CD8-positive, alpha-beta memory T cell (primary cell): ENCODE measurements at regions of chr18 and their contacts with region 1.

Region 1: DNA sequence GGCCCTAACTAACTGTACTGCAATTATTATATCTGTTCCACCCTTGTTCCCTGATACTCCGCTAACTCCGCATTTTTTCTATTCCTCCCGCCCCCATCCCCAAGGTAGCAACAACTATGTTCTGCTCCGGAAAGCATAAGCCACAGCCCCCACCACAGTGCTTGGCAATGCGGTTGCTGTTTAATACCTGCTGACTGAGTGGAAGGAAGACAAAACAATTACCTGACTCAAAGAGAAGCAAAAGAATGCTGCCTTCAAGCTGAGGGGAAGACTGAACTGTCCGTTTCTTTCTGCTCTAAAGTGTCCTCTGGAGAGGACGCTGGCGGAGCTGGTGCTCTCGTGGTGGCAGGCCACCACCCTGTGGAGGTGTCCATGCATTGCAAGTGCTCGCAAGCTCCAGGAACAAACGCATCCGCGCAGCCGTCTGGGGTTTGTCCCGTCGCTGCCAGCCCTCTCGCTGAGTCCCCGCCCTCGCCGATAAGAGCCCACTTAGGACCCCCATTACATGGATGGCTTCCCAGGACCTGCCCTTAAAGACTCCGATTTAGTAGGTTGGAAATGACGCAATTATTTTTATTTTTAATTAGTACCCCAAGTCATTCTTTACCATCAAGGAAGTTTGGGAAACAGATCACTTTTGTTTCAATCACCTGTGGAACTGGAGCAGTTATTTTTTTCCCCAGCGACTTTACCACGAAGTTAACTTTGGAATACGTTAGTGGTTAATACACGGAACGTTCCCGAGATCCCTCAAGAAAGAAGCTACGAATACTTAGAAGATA is 1.6 kb upstream of the MYL12A start:
- DNase-seq: peak; percentile 62 to 83 (median 69)
- H3K4me3 ChIP-seq: peak overlapping the region; percentile 96
- H3K4me3 Mint-ChIP-seq: peak overlapping the region; percentile 92 to 98 (median 94)
- H3K27ac ChIP-seq: peak overlapping the region; percentile 96
- H3K27ac Mint-ChIP-seq: peak overlapping the region; percentile 91 to 98 (median 97)
- H3K4me1 ChIP-seq: peaks cover 23% of the 10 kb centered on the region
- H3K4me1 Mint-ChIP-seq: peaks cover 33 to 53% (median 45%) of the 10 kb centered on the region in 3 donors
- H3K27me3 ChIP-seq: no peaks in the 10 kb centered on the region
- H3K27me3 Mint-ChIP-seq: peaks cover 0 to 2% of the 10 kb centered on the region in 2 donors

Region 2: DNA sequence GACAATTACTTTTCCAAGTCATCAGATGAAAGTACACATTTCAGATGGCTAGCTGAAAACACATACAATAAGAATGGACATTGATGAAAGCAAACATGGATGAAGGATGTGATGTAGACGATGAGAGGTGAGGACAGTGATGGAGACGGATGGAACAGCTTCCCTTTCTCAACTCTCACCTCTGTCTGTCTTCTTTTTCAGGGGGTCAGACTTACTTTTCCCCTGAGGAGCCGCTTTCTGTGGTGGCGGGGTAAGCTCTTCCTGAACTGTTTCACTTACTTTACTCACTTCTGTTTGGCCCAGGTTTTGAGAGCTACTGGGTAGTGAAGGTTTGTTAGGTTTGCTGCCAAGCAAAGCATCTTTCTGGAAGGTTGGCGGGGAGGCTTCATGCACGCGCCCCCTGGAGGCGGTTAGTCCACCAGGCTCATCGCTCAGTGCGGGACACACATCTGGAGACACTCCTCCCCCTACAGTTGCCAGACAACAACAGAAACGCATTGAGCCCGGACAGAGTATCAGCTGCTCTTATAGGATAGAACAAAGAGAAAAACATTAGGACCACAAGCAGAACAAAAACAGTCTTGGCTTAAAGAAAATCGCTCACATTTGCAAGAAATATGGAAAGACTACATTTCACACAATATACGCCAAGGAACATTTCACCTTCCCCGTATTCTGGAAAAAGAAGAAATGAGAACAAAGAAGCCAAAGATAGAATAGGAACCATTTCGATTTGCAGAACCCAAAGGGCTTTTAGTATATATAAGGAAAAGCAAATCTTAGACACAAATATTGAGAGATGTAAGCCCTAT is 116.8 kb before region 1 on chr18:
- CTCF ChIA-PET with region 1: interaction called, 13 read pairs
- POLR2A ChIA-PET with region 1: no interaction called
- DNase-seq: peak; percentile 62 to 84 (median 67)
- H3K4me3 ChIP-seq: no peak overlapping the region
- H3K4me3 Mint-ChIP-seq: no peak overlapping the region
- H3K27ac ChIP-seq: no peak overlapping the region
- H3K27ac Mint-ChIP-seq: peak overlapping the region in 4 of 8 donors; percentile 10 to 58 (median 29)
- H3K4me1 ChIP-seq: peaks cover 8% of the 10 kb centered on the region
- H3K4me1 Mint-ChIP-seq: peaks cover 9% of the 10 kb centered on the region in 3 donors
- H3K27me3 ChIP-seq: no peaks in the 10 kb centered on the region
- H3K27me3 Mint-ChIP-seq: peaks cover 0 to 3% of the 10 kb centered on the region in 2 donors

Region 3: GRCh38 chr18:3261371-3262246 is 15.6 kb after region 1 on chr18 and contains the start of gene MYL12B:
- CTCF ChIA-PET with region 1: interaction called, 32 read pairs
- POLR2A ChIA-PET with region 1: interaction called, 134 read pairs
- DNase-seq: peak; percentile 81 to 91 (median 85)
- H3K4me3 ChIP-seq: peak within 1 kb of the TSS; percentile 82
- H3K4me3 Mint-ChIP-seq: peak within 1 kb of the TSS; percentile 90 to 99 (median 98)
- H3K27ac ChIP-seq: peak within 1 kb of the TSS; percentile 95
- H3K27ac Mint-ChIP-seq: peak within 1 kb of the TSS; percentile 96 to 100 (median 100)
- H3K4me1 ChIP-seq: peaks cover 77% of the 10 kb centered on the region
- H3K4me1 Mint-ChIP-seq: peaks cover 67 to 88% (median 86%) of the 10 kb centered on the region in 3 donors
- H3K27me3 ChIP-seq: no peaks in the 10 kb centered on the region
- H3K27me3 Mint-ChIP-seq: no peaks in the 10 kb centered on the region
- total RNA-seq, gene MYL12B: 251 to 252 TPM

Region 4: DNA sequence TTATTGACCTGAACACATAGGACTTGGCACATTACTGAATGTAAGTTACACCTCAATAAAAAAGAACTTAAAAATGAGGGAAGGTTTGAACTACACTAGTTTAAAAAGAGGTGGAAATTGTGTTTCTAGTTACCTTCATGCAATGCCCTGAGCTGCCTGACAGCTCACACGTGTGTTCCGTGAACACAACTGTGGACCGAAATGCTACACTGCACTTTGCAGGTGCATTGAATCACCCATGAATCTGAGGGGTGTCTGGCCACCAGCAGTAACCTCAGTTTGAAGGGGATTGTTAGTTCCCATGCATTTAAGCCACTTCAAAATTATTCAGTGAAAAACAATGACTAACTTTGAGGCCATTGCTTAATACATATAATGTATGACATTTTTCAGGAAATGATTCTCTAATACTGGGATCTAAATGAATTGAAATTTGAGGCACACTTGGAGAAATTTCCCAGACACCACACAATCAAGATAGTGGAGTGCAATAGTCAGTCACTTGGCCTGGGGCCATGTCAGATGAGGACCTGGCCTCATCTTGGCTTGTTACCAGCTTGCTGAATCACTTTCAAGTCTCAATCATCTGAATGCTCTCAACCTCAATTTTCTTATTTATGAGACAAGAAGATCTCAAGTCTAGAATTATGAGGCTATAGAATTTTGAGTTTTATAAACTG is 75.2 kb after region 1 on chr18:
- CTCF ChIA-PET with region 1: no interaction called
- POLR2A ChIA-PET with region 1: no interaction called
- DNase-seq: no peak
- H3K4me3 ChIP-seq: no peak overlapping the region
- H3K4me3 Mint-ChIP-seq: no peak overlapping the region
- H3K27ac ChIP-seq: no peak overlapping the region
- H3K27ac Mint-ChIP-seq: no peak overlapping the region
- H3K4me1 ChIP-seq: no peaks in the 10 kb centered on the region
- H3K4me1 Mint-ChIP-seq: peaks cover 0 to 5% (median 0%) of the 10 kb centered on the region in 3 donors
- H3K27me3 ChIP-seq: no peaks in the 10 kb centered on the region
- H3K27me3 Mint-ChIP-seq: peaks cover 4 to 26% of the 10 kb centered on the region in 2 donors

Region 5: DNA sequence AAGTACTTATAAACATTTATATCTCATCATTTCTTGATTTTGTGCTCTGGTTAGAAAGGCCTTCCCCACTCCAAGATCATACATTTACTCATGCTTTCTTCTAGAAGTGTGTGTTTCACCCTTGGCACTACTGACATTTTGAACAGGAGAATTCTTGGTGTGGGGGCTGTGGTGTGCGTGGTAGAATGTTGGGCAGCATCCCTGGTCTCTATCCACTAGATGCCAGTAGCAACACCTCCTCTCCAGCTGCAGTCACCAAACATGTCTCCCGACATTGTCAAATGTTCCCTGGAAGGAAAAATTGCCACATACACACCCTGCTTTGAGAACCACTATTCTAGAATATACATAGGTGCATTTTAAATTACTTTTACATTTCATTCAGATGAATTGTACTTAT is 195.2 kb after region 1 on chr18:
- CTCF ChIA-PET with region 1: no interaction called
- POLR2A ChIA-PET with region 1: no interaction called
- DNase-seq: peak in 1 of 5 donors; percentile 26
- H3K4me3 ChIP-seq: no peak overlapping the region
- H3K4me3 Mint-ChIP-seq: no peak overlapping the region
- H3K27ac ChIP-seq: no peak overlapping the region
- H3K27ac Mint-ChIP-seq: no peak overlapping the region
- H3K4me1 ChIP-seq: no peaks in the 10 kb centered on the region
- H3K4me1 Mint-ChIP-seq: no peaks in the 10 kb centered on the region
- H3K27me3 ChIP-seq: no peaks in the 10 kb centered on the region
- H3K27me3 Mint-ChIP-seq: peaks cover 0 to 3% of the 10 kb centered on the region in 2 donors

Region 6: GRCh38 chr18:3454365-3455089 is 208.5 kb after region 1 on chr18:
- CTCF ChIA-PET with region 1: interaction called, 4 read pairs
- POLR2A ChIA-PET with region 1: interaction called, 13 read pairs
- DNase-seq: peak in 4 of 5 donors; percentile 29 to 61 (median 52)
- H3K4me3 ChIP-seq: peak overlapping the region; percentile 81
- H3K4me3 Mint-ChIP-seq: peak overlapping the region; percentile 85 to 99 (median 97)
- H3K27ac ChIP-seq: peak overlapping the region; percentile 94
- H3K27ac Mint-ChIP-seq: peak overlapping the region; percentile 66 to 100 (median 96)
- H3K4me1 ChIP-seq: peaks cover 29% of the 10 kb centered on the region
- H3K4me1 Mint-ChIP-seq: peaks cover 63 to 76% (median 72%) of the 10 kb centered on the region in 3 donors
- H3K27me3 ChIP-seq: no peaks in the 10 kb centered on the region
- H3K27me3 Mint-ChIP-seq: peaks cover 0 to 7% of the 10 kb centered on the region in 2 donors

Region 7: DNA sequence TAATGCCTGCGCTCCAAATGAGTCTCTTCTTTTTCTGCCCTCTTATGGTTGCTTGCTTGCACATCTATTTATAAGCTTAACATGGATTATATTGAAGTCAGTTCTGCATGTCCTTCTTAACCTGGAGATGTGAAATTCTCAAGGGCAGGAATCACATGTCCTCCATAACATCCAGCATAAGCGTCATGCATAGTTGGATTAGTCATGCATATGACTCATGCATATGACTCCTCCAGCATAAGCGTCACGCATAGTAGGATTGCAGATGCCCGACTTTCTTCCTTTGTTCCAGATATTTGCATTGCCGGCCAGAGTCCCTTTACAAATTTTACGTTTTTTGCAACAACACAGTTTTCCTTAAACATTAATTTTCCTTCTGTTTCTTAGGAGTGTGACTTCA is 512.5 kb after region 1 on chr18:
- CTCF ChIA-PET with region 1: no interaction called
- POLR2A ChIA-PET with region 1: no interaction called
- DNase-seq: no peak
- H3K4me3 ChIP-seq: no peak overlapping the region
- H3K4me3 Mint-ChIP-seq: no peak overlapping the region
- H3K27ac ChIP-seq: no peak overlapping the region
- H3K27ac Mint-ChIP-seq: no peak overlapping the region
- H3K4me1 ChIP-seq: no peaks in the 10 kb centered on the region
- H3K4me1 Mint-ChIP-seq: no peaks in the 10 kb centered on the region
- H3K27me3 ChIP-seq: no peaks in the 10 kb centered on the region
- H3K27me3 Mint-ChIP-seq: peaks cover 5 to 8% of the 10 kb centered on the region in 2 donors